ENCODE measurements at regions of chr1 and their contacts with region 1.

Region 1: DNA sequence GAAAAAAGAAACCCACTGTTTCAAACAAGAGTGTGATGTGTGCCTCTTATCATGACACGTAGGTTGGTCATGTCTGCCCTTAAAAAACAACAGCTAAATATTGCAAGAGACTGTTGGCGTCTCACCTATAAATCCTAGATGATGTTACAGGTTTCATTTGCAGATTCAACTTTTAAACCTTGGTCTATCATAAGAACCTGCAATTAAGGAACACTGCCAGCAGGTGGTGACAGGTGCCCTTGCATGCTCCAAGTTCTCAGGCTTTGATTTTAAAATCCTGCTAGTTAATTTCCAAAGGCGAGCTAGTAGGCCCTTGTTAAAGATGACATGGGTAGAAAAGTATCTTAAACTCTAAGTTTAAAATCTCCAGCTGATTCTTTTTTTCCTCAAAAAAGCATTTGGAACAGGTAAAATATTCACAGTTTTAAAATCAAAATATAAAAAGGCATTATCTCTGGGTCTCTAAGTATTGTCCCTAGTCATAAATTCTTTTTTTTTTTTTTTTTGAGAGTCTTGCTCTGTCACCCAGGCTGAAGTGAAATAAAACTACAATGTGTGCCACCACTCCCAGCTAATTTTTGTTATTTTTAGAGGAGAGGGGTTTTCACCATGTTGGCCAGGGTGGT is 39.1 kb downstream of the CLSTN1 start:
- DNase-seq: peak; percentile 88
- H3K4me3 ChIP-seq: peak overlapping the region; percentile 37
- H3K27ac ChIP-seq: peak overlapping the region; percentile 97
- H3K4me1 ChIP-seq: peaks cover 70% of the 10 kb centered on the region
- CTCF ChIP-seq: peak; percentile 99

Region 2: GRCh38 chr1:9561429-9561828 is 223.2 kb before region 1 on chr1:
- CTCF ChIA-PET with region 1: no interaction called
- POLR2A ChIA-PET with region 1: interaction called, 10 read pairs
- intact Hi-C with region 1: no loop called
- DNase-seq: peak; percentile 24
- H3K4me3 ChIP-seq: no peak overlapping the region
- H3K27ac ChIP-seq: no peak overlapping the region
- H3K4me1 ChIP-seq: peaks cover 52% of the 10 kb centered on the region
- CTCF ChIP-seq: no peak

Region 3: GRCh38 chr1:9823943-9824701 is 39.5 kb after region 1 on chr1 and contains the start of gene CLSTN1:
- CTCF ChIA-PET with region 1: interaction called, 3 read pairs
- POLR2A ChIA-PET with region 1: interaction called, 37 read pairs
- intact Hi-C with region 1: loop called (anchors 1 kb)
- DNase-seq: peak; percentile 92
- H3K4me3 ChIP-seq: peak within 1 kb of the TSS; percentile 98
- H3K27ac ChIP-seq: peak within 1 kb of the TSS; percentile 34
- H3K4me1 ChIP-seq: peaks cover 46% of the 10 kb centered on the region
- CTCF ChIP-seq: no peak
- total RNA-seq, gene CLSTN1: 49.4 and 58.6 TPM in 2 replicates

Region 4: DNA sequence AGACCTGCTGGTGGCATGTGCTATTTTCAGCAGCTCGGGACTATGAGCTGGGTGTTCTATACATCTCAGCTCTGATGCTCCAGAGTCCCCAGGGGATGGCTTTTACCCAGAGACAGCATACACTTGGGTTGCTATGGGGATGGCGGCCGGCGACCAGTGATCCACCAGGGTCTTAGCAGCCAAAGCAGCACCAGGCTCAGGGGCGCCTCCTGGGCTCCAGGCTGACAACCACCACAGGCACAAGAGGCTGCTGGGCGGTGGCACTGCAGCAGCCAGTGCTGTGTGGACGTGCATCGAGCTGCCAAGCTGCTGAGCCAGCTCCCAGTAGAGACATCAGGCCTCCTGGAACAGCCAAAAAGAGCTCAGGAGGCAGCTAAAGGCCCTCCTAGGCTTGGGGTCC is 76.7 kb after region 1 on chr1:
- CTCF ChIA-PET with region 1: interaction called, 53 read pairs
- POLR2A ChIA-PET with region 1: interaction called, 141 read pairs
- intact Hi-C with region 1: no loop called
- DNase-seq: peak; percentile 54
- H3K4me3 ChIP-seq: no peak overlapping the region
- H3K27ac ChIP-seq: no peak overlapping the region
- H3K4me1 ChIP-seq: peaks cover 51% of the 10 kb centered on the region
- CTCF ChIP-seq: peak; percentile 61

Region 5: DNA sequence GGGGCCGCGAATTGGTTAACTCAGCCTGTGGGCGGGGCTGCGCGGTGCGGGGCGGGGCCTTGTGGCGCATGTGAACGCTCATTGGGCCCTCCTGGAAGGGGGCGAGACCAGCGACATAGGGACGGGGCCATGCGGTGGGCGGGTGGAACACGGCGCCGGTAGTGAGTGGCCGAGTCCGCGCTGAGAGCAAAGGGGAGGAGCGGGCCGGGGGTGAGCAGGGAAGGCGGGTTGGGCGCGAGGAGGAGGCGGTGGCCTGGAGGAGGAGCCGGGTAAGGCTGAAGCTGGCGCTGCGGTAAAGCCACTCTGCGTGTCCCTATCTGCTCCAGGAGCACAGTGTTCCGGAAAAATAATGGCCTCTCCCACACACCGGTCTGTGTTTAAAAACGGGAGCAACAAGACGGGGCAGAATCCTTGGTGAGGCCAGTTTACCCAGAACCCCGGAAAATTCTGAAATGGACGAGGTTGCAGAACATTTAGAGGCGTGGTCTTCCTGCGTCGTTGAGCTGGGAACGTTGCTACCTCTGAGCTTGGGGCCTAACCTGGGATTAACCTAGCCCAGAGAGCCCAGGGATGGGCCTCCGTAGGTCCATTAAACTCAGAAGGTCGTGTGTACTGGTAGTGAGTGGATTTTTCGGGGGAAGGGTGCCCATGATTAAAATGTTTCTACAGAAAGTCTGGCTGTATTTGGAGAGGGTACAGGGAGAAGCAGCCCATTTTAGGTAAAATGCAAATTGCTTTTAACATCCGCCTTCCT is 126.0 kb after region 1 on chr1:
- CTCF ChIA-PET with region 1: no interaction called
- POLR2A ChIA-PET with region 1: no interaction called
- intact Hi-C with region 1: loop called (anchors 1 kb)
- DNase-seq: peak; percentile 99
- H3K4me3 ChIP-seq: peak overlapping the region; percentile 70
- H3K27ac ChIP-seq: peak overlapping the region; percentile 85
- H3K4me1 ChIP-seq: peaks cover 16% of the 10 kb centered on the region
- CTCF ChIP-seq: no peak

Region 6: GRCh38 chr1:10032590-10033358 is 248.2 kb after region 1 on chr1 and contains the start of gene UBE4B:
- CTCF ChIA-PET with region 1: no interaction called
- POLR2A ChIA-PET with region 1: no interaction called
- intact Hi-C with region 1: loop called (anchors 1 kb)
- DNase-seq: peak; percentile 98
- H3K4me3 ChIP-seq: peak within 1 kb of the TSS; percentile 98
- H3K27ac ChIP-seq: peak within 1 kb of the TSS; percentile 80
- H3K4me1 ChIP-seq: peaks cover 16% of the 10 kb centered on the region
- CTCF ChIP-seq: peak; percentile 84
- total RNA-seq, gene UBE4B: 19.7 and 21.5 TPM in 2 replicates

Region 7: DNA sequence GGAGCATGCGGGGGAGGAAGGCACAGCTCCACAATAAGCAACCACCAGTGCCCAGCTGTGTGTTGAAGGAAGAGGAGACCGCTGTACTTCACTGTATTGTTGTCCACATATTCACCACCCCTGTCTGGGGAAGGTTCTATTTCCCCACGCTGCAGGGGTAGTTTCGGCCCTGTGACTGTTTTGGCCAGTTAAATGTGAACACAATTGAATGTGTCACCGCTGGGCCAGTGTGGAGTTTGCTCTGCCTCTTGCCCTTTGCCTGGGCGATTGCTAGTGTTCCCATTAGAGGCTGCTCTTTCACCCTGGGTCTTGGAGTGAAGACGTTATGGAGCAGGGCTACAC is 280.7 kb after region 1 on chr1:
- CTCF ChIA-PET with region 1: no interaction called
- POLR2A ChIA-PET with region 1: no interaction called
- intact Hi-C with region 1: no loop called
- DNase-seq: no peak
- H3K4me3 ChIP-seq: no peak overlapping the region
- H3K27ac ChIP-seq: no peak overlapping the region
- H3K4me1 ChIP-seq: no peaks in the 10 kb centered on the region
- CTCF ChIP-seq: no peak